RWPE1 (cell line): ENCODE measurements at regions of chr15 and their contacts with region 1.

Region 1: GRCh38 chr15:72722071-72722696 is 36.2 kb downstream of the BBS4 start:
- DNase-seq: peak; percentile 52
- H3K27ac ChIP-seq: no peak overlapping the region
- CTCF ChIP-seq: peak; percentile 81

Region 2: DNA sequence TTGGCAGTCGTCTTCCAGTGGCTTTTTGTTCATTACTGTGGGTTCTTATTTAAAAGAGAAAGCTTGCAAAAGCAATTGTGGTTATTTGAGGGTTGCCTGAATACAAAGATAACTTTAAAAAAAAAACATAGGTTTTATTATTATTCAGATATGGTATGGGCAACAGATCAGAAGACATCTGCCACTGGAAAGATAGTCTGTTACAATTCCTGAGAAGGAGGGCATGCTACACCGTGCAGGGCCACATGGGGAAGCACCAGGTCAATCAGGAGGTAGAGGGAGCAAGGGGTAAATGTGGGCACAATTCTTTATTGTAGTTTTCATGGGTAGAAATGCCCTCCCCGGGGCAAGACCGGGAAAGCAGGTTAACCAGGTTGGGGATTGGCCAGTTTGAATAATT is 10.3 kb after region 1 on chr15:
- CTCF ChIA-PET with region 1: interaction called, 10 read pairs
- POLR2A ChIA-PET with region 1: no interaction called
- DNase-seq: no peak
- H3K27ac ChIP-seq: no peak overlapping the region
- CTCF ChIP-seq: 0 out of 2 replicates have a peak, but pooled peaks have one; percentile 10

Region 3: DNA sequence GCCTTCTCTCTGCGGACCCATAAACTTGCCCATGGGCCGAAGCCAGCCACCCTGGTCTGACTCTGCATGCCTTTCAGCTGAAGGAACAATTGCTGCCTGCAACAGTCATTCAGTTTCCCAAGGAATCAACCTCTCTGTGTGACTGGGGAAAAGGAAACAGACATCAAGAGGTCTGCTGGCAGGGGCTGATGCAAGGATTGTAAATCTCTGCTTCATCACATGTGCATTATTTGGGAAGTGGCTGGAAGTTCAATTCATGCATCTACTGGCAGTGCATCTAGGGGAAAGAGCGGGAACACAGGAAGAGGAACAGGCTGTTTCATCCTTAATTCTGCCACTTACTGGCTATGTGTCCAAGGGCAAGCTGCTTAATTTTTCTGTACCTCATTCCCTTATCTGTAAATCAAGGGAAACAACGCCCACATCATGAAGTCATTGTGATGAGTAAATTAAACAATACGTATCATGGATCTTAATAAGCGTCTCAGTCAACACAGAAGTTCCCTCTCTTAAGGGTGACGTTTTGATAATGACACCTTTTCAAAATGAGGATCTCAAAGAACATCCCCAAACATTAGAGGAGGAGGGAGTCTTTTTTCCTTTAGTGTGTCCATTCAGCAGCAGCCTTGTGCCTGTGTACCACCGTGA is 78.8 kb after region 1 on chr15:
- CTCF ChIA-PET with region 1: no interaction called
- POLR2A ChIA-PET with region 1: no interaction called
- DNase-seq: no peak
- H3K27ac ChIP-seq: no peak overlapping the region
- CTCF ChIP-seq: no peak

Region 4: GRCh38 chr15:72835294-72835890 is 113.2 kb after region 1 on chr15:
- CTCF ChIA-PET with region 1: no interaction called
- POLR2A ChIA-PET with region 1: no interaction called
- DNase-seq: no peak
- H3K27ac ChIP-seq: no peak overlapping the region
- CTCF ChIP-seq: no peak; the same call in 1 of the 2 replicates

Region 5: GRCh38 chr15:73081321-73081958 is 359.3 kb after region 1 on chr15:
- CTCF ChIA-PET with region 1: interaction called, 11 read pairs
- POLR2A ChIA-PET with region 1: no interaction called
- DNase-seq: peak; percentile 38
- H3K27ac ChIP-seq: no peak overlapping the region
- CTCF ChIP-seq: peak; percentile 82